SK-N-SH (cell line): ENCODE measurements at regions of chr9 and their contacts with region 1.

Region 1: DNA sequence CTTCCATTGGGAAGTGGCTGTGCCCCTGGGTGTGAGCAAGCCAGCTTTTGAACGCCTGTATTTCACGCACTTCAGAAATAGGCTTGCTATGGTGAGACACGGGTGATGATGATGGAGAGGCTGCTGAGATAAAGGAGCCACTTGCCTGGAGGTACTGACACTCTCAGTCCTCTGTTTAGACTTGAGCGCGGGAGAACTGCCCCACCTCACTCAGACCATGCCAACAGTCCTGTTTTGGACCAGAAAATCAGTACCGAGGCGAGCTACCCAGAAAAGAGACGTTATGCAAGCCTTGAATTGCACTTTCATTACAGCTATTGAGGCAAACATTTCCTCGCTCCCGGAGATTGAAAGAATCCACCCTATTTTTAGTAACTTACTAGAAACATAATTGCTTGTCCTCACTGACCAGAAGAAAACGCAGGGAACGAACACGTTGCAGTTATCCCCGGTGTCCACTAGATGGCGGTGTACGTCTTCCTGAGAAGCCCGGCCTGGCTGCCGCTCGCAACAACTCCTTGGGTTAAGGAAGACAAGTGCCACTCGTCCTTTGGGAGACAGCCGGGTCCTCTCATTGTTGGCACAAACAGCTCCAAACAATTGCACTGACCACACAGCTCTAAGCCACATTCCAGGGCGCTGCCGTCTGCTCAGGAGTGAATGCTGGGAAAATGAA is 142.4 kb downstream of the PSAT1 start:
- DNase-seq: peak; percentile 87
- H3K4me3 ChIP-seq: peak overlapping the region in 1 of 2 experiments; percentile 32; a peak in 1 of 4 replicates
- H3K27ac ChIP-seq: no peak overlapping the region
- H3K4me1 ChIP-seq: peaks cover 0 to 12% of the 10 kb centered on the region in 2 experiments; a peak in 1 of 4 replicates
- H3K27me3 ChIP-seq: no peaks in the 10 kb centered on the region
- CTCF ChIP-seq: peak; percentile 96
- EP300 ChIP-seq: no peak
- RAD21 ChIP-seq: peak; percentile 99

Region 2: GRCh38 chr9:77839459-77840140 is 599.7 kb before region 1 on chr9:
- CTCF ChIA-PET with region 1: no interaction called
- POLR2A ChIA-PET with region 1: no interaction called
- DNase-seq: no peak
- H3K4me3 ChIP-seq: no peak overlapping the region
- H3K27ac ChIP-seq: peak overlapping the region; percentile 6 to 77; a peak in 3 of 4 replicates
- H3K4me1 ChIP-seq: peaks cover 7 to 30% of the 10 kb centered on the region in 2 experiments
- H3K27me3 ChIP-seq: no peaks in the 10 kb centered on the region
- CTCF ChIP-seq: no peak
- EP300 ChIP-seq: peak; percentile 15 to 18; a peak in 1 of 4 replicates
- RAD21 ChIP-seq: no peak

Region 3: DNA sequence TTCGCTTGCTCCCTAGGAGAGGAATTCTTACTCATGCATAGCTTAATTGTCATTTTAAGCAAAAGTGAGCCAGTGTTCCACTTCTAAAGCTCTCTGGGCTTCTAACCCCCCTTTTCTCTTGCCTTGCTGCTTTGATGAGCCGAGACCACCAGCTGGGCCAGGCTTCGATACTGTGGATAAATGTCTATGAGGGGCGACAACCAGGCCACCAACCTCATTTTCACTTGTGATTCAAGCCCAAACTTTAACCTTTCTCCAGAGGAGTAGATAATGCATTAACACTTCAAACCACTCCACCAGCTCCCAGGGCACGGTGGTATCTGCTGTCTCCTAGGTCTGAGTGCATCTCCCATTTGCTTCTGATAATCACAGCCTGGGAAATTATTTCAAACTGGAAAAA is 63.2 kb after region 1 on chr9:
- CTCF ChIA-PET with region 1: interaction called, 14 read pairs
- POLR2A ChIA-PET with region 1: no interaction called
- DNase-seq: no peak
- H3K4me3 ChIP-seq: no peak overlapping the region
- H3K27ac ChIP-seq: peak overlapping the region in 1 of 2 experiments; percentile 28; a peak in 1 of 4 replicates
- H3K4me1 ChIP-seq: peaks cover 0 to 25% of the 10 kb centered on the region in 2 experiments; a peak in 2 of 4 replicates
- H3K27me3 ChIP-seq: no peaks in the 10 kb centered on the region
- CTCF ChIP-seq: no peak
- EP300 ChIP-seq: no peak
- RAD21 ChIP-seq: no peak

Region 4: GRCh38 chr9:78601957-78602565 is 162.7 kb after region 1 on chr9:
- CTCF ChIA-PET with region 1: interaction called, 38 read pairs
- POLR2A ChIA-PET with region 1: no interaction called
- DNase-seq: peak; percentile 30
- H3K4me3 ChIP-seq: no peak overlapping the region; a peak in 1 of 4 replicates
- H3K27ac ChIP-seq: no peak overlapping the region
- H3K4me1 ChIP-seq: peaks cover 0 to 14% of the 10 kb centered on the region in 2 experiments; a peak in 3 of 4 replicates
- H3K27me3 ChIP-seq: no peaks in the 10 kb centered on the region
- CTCF ChIP-seq: peak; percentile 91
- EP300 ChIP-seq: no peak
- RAD21 ChIP-seq: peak; percentile 90